ENCODE measurements at regions of chr19 and their contacts with region 1.

Region 1: GRCh38 chr19:43765109-43765876 is 10.5 kb upstream of the SMG9 start:
- DNase-seq: peak; percentile 99
- H3K4me3 Mint-ChIP-seq: peak overlapping the region; percentile 15
- H3K27ac Mint-ChIP-seq: peak overlapping the region; percentile 75
- H3K4me1 Mint-ChIP-seq: peaks cover 47% of the 10 kb centered on the region
- H3K27me3 Mint-ChIP-seq: no peaks in the 10 kb centered on the region
- CTCF ChIP-seq: no peak

Region 2: GRCh38 chr19:43747557-43748204 is 17.6 kb before region 1 on chr19:
- CTCF ChIA-PET with region 1: interaction called, 14 read pairs
- POLR2A ChIA-PET with region 1: interaction called, 117 read pairs
- intact Hi-C with region 1: no loop called
- DNase-seq: no peak
- H3K4me3 Mint-ChIP-seq: no peak overlapping the region
- H3K27ac Mint-ChIP-seq: no peak overlapping the region
- H3K4me1 Mint-ChIP-seq: peaks cover 32% of the 10 kb centered on the region
- H3K27me3 Mint-ChIP-seq: no peaks in the 10 kb centered on the region
- CTCF ChIP-seq: no peak

Region 3: DNA sequence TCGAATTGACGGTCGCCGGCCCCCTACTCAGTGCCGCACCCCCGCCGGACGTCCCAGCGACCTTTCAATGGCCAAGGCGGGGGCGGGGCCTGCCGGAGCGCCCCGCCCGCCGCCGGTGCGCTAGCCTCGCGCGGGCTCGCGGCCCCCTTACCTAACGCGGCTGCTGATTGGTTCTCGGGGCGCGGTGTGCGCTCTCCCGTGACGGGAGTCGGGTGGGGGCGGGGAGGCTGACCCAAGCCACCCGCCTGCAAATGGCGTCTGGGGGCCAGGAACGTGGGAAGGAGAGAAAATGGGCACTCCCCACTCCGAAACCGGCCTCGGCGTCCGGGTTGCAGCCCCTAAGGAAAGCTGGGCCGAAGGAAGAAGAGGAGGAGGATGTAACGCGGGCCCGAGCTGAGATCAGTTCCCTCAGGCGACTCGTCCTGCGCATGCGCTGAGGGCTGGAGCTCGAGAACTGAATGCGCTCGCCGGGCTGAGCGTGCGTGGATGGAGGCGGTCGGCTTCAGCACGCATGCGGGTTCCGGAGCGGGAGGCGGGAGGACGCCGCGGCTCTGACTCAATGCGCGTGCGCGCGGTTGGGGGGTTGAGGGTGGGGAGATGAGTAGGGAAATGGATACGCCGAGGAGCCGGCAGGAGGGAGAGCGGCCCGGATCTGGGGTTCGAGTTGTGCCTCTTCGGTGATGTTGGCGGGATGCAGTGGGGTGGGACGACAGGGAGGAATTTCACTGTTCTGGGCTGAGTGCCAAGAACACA is 10.6 kb before region 1 on chr19 and contains the start of gene SMG9:
- CTCF ChIA-PET with region 1: interaction called, 11 read pairs
- POLR2A ChIA-PET with region 1: interaction called, 117 read pairs
- intact Hi-C with region 1: no loop called
- DNase-seq: peak; percentile 98
- H3K4me3 Mint-ChIP-seq: peak within 1 kb of the TSS; percentile 93
- H3K27ac Mint-ChIP-seq: peak within 1 kb of the TSS; percentile 98
- H3K4me1 Mint-ChIP-seq: peaks cover 68% of the 10 kb centered on the region
- H3K27me3 Mint-ChIP-seq: no peaks in the 10 kb centered on the region
- CTCF ChIP-seq: no peak
- total RNA-seq, gene SMG9: 76.0 and 76.4 TPM in 2 replicates

Region 4: GRCh38 chr19:43784981-43785808 is 19.9 kb after region 1 on chr19:
- CTCF ChIA-PET with region 1: interaction called, 71 read pairs
- POLR2A ChIA-PET with region 1: interaction called, 409 read pairs
- intact Hi-C with region 1: no loop called
- DNase-seq: peak; percentile 89
- H3K4me3 Mint-ChIP-seq: peak overlapping the region; percentile 86
- H3K27ac Mint-ChIP-seq: peak overlapping the region; percentile 90
- H3K4me1 Mint-ChIP-seq: peaks cover 63% of the 10 kb centered on the region
- H3K27me3 Mint-ChIP-seq: no peaks in the 10 kb centered on the region
- CTCF ChIP-seq: peak; percentile 92

Region 5: GRCh38 chr19:43809762-43810696 is 44.7 kb after region 1 on chr19:
- CTCF ChIA-PET with region 1: interaction called, 12 read pairs
- POLR2A ChIA-PET with region 1: interaction called, 3 read pairs
- intact Hi-C with region 1: no loop called
- DNase-seq: peak; percentile 74
- H3K4me3 Mint-ChIP-seq: no peak overlapping the region
- H3K27ac Mint-ChIP-seq: no peak overlapping the region
- H3K4me1 Mint-ChIP-seq: peaks cover 6% of the 10 kb centered on the region
- H3K27me3 Mint-ChIP-seq: peaks cover 11% of the 10 kb centered on the region
- CTCF ChIP-seq: peak; percentile 60

Region 6: GRCh38 chr19:44746946-44747738 is 981.8 kb after region 1 on chr19:
- CTCF ChIA-PET with region 1: no interaction called
- POLR2A ChIA-PET with region 1: no interaction called
- intact Hi-C with region 1: loop called (anchors 10 kb)
- DNase-seq: peak; percentile 98
- H3K4me3 Mint-ChIP-seq: peak overlapping the region; percentile 83
- H3K27ac Mint-ChIP-seq: no peak overlapping the region
- H3K4me1 Mint-ChIP-seq: peaks cover 58% of the 10 kb centered on the region
- H3K27me3 Mint-ChIP-seq: no peaks in the 10 kb centered on the region
- CTCF ChIP-seq: no peak

Measured in MCF 10A (cell line).